ENCODE measurements at regions of chr7 and their contacts with region 1.

Region 1: DNA sequence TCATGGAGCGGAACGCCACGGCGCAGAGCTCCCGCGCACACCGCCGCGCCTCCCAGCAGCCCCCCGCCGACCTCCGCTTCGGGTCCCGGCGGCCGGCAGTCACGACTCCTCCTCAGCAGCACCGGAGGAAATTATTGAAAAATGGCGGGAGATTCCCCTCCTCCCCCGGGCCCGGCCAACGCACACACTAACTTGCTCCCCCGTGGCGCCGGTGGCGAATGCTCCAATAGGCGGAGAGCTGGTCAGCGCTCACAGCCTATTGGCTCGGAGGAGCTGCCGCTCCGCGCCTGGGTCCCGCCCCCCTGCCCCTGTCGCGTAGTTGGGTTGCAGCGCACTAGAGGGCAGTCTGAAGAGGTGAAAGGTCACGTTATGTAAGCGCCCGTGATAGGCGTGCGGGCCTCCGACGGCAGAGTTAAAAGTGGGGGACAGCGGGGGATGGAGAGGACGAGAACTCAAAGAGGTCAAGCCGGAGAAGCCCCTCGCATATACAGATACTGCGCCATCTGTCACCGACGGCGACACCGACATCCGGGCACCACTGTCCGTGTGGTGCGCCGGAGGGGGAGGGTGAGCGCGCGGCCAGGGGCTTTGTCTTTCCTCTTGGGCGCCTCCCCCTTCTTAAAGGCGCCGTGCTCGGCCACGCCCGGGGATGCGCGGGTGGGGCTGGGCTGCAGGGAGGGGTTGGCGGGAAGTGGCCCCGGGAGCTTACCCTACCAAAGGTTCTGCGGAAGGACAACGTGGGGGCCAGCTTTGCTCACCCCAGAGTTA is at the start of gene BAZ1B:
- DNase-seq: peak; percentile 99
- H3K4me3 ChIP-seq: peak within 1 kb of the TSS; percentile 66 to 75
- H3K27ac ChIP-seq: peak within 1 kb of the TSS; percentile 90
- H3K4me1 ChIP-seq: peaks cover 42% of the 10 kb centered on the region
- H3K27me3 ChIP-seq: no peaks in the 10 kb centered on the region
- CTCF ChIP-seq: no peak
- POLR2A ChIP-seq: peak in 1 of 2 donors; percentile 44
- total RNA-seq, gene BAZ1B: 45.4 TPM

Region 2: GRCh38 chr7:73468097-73468496 is 54.2 kb before region 1 on chr7:
- intact Hi-C with region 1: loop called (anchors 1 kb)
- DNase-seq: no peak
- H3K4me3 ChIP-seq: no peak overlapping the region
- H3K27ac ChIP-seq: no peak overlapping the region
- H3K4me1 ChIP-seq: no peaks in the 10 kb centered on the region
- H3K27me3 ChIP-seq: no peaks in the 10 kb centered on the region
- CTCF ChIP-seq: no peak
- POLR2A ChIP-seq: no peak

Region 3: DNA sequence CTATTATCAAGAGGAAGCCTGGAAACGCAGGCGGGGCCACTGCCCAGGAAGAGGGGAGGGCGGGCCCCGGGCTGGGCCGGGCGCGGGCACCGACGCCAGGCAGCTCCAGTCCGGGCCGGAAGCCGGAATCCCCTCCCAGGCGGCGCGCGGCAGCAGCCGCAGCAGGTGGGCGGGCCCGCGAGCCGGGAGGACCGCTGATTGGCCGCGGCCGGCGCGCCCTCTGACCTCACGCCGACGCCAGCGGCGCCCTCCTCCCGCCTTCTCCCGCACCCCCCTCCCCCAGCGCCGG is 34.8 kb after region 1 on chr7:
- intact Hi-C with region 1: loop called (anchors 5 kb)
- DNase-seq: peak in 1 of 2 donors; percentile 95
- H3K4me3 ChIP-seq: peak overlapping the region; percentile 73 to 95
- H3K27ac ChIP-seq: peak overlapping the region; percentile 99
- H3K4me1 ChIP-seq: peaks cover 24% of the 10 kb centered on the region
- H3K27me3 ChIP-seq: no peaks in the 10 kb centered on the region
- CTCF ChIP-seq: no peak
- POLR2A ChIP-seq: no peak

Region 4: GRCh38 chr7:73578342-73579127 is 56.2 kb after region 1 on chr7 and contains the start of gene TBL2:
- intact Hi-C with region 1: loop called (anchors 5 kb)
- DNase-seq: peak in 1 of 2 donors; percentile 98
- H3K4me3 ChIP-seq: peak within 1 kb of the TSS; percentile 54 to 93
- H3K27ac ChIP-seq: peak within 1 kb of the TSS; percentile 94
- H3K4me1 ChIP-seq: peaks cover 32% of the 10 kb centered on the region
- H3K27me3 ChIP-seq: no peaks in the 10 kb centered on the region
- CTCF ChIP-seq: no peak
- POLR2A ChIP-seq: peak; percentile 62 to 89
- total RNA-seq, gene TBL2: 29.0 TPM

Measured in vagina (tissue), 2 donors.